ENCODE measurements at regions of chr5 and their contacts with region 1.

Region 1: GRCh38 chr5:81751009-81751835 is at the start of gene SSBP2:
- DNase-seq: peak; percentile 99 to 100
- ATAC-seq: peak; percentile 97
- H3K4me3 ChIP-seq: peak within 1 kb of the TSS; percentile 94 to 95
- H3K27ac ChIP-seq: peak within 1 kb of the TSS; percentile 58 to 91
- H3K4me1 ChIP-seq: no peaks in the 10 kb centered on the region
- H3K27me3 ChIP-seq: no peaks in the 10 kb centered on the region
- total RNA-seq, gene SSBP2: 73.7 to 92.0 TPM

Region 2: DNA sequence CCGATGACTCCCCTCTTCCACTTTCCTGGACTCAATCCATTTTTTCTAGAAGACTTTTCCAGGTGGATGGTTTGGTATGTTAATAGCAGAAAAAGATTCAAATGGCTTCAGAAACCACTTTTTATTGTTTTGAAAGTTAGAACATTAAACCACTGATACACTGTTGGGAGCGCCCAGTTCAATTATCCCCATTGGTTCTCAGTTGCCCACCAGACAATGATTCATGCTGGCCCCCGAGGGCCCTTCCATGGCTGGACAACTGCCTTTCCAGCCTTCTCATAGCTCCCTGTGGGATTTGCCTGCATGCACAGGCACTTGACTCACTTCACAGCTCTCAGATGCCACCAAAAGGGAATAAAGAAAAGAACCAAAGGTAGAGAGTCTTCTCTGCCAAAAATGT is 1159.9 kb before region 1 on chr5:
- intact Hi-C with region 1: no loop called
- DNase-seq: no peak
- ATAC-seq: no peak
- H3K4me3 ChIP-seq: no peak overlapping the region
- H3K27ac ChIP-seq: no peak overlapping the region
- H3K4me1 ChIP-seq: no peaks in the 10 kb centered on the region
- H3K27me3 ChIP-seq: no peaks in the 10 kb centered on the region

Region 3: GRCh38 chr5:81506900-81507588 is 244.2 kb before region 1 on chr5:
- intact Hi-C with region 1: loop called (anchors 5 kb)
- DNase-seq: peak in 1 of 2 donors; percentile 54
- ATAC-seq: peak; percentile 98
- H3K4me3 ChIP-seq: no peak overlapping the region
- H3K27ac ChIP-seq: no peak overlapping the region
- H3K4me1 ChIP-seq: no peaks in the 10 kb centered on the region
- H3K27me3 ChIP-seq: no peaks in the 10 kb centered on the region

Region 4: DNA sequence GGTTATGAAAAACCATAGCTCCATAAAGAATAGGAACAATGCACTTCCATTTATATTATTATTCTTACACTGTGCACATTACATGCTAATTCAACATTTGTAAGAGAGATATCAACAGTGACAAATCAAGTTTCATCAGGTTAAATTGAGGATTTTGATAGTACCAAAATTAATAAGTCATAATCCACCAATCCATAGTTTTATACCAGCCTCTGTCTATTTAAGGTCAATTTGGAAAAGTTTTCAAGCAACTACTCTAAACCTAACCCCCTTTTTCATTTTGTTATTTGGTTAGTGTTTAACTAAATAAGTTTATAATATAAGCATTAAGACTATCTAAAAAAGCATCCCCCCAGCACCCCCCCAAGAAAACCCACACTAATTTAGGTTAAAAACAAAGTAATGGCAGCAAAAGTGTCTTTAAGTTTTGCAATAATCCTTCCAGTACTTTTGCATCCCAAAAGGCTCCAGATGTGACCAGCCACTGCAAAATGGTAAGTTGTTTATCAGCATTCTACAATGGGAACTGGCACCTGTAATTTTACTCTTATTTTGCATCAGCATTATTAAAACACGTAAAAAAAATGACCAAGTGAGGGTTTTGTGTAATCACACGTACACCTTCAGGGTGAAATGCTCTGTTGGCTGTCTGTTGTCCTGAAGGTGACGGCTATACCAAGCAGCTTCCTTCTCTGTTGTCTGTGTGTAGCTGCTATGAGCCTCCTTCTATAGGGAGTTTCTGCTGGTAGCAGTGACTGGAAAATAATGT is 36.4 kb after region 1 on chr5:
- intact Hi-C with region 1: loop called (anchors 1 to 2 kb)
- DNase-seq: peak in 1 of 2 donors; percentile 71
- ATAC-seq: peak; percentile 86
- H3K4me3 ChIP-seq: no peak overlapping the region
- H3K27ac ChIP-seq: no peak overlapping the region
- H3K4me1 ChIP-seq: peaks cover 4 to 6% of the 10 kb centered on the region in 2 donors
- H3K27me3 ChIP-seq: no peaks in the 10 kb centered on the region

Region 5: DNA sequence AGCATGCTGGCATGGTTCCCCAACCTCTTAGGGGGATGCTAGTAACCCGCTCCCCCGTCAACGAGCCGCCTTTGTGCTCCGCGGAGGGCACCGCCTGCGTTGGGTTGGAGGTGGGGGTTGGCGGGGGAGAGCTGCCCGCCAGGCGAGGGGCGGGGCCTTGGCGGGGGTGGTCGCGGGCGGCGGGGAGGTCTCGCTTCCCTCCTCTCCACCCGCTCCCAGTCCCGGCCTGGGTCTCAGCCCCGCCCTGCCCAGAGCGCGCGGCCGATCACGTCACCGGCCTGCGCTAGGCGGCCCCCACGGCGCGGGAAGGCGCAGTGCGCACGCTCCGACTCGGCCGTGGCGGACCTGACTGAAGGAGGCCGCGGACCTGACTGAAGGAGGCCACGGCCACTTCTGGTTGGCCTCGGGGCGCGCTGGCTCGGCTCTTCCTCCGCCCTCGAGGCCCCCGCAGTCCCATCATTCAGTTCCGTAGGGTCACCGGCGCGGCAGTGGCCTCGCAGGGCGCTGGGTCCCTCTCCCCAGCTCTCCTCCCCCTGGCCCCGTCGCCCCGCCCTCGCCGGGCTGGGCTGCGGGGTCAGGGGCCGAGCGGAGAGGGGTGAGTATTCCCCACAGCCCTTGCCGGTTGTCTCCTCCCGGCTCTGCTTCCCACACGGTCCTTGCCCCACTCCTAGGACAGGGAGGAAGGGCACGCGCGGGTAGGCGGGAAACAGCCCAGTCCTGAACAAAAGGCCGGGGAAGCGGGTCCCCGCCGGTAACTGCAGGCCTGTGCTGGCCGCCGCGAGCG is 220.7 kb after region 1 on chr5 and contains the start of gene ATG10:
- intact Hi-C with region 1: loop called (anchors 5 to 10 kb)
- DNase-seq: peak; percentile 95 to 97
- ATAC-seq: peak; percentile 100
- H3K4me3 ChIP-seq: peak within 1 kb of the TSS; percentile 96 to 97
- H3K27ac ChIP-seq: peak within 1 kb of the TSS; percentile 65 to 95
- H3K4me1 ChIP-seq: no peaks in the 10 kb centered on the region
- H3K27me3 ChIP-seq: no peaks in the 10 kb centered on the region
- total RNA-seq, gene ATG10: 7.1 to 10.3 TPM